Left lung (tissue), 14 donors: ENCODE measurements at regions of chr19 and their contacts with region 1.

Region 1: GRCh38 chr19:42254989-42255765 is at the start of gene ERF:
- DNase-seq: peak; percentile 94 to 98 (median 95)
- ATAC-seq: peak; percentile 83
- H3K4me3 ChIP-seq: peak within 1 kb of the TSS; percentile 98 to 100
- H3K27ac ChIP-seq: peak within 1 kb of the TSS; percentile 95 to 98
- H3K4me1 ChIP-seq: peaks cover 24 to 48% of the 10 kb centered on the region in 2 donors
- H3K27me3 ChIP-seq: peaks cover 0 to 19% of the 10 kb centered on the region in 2 donors
- CTCF ChIP-seq: peak in 1 of 2 donors; percentile 14
- polyA plus RNA-seq, gene ERF: 42.9 to 56.4 (median 48.9) TPM

Region 2: DNA sequence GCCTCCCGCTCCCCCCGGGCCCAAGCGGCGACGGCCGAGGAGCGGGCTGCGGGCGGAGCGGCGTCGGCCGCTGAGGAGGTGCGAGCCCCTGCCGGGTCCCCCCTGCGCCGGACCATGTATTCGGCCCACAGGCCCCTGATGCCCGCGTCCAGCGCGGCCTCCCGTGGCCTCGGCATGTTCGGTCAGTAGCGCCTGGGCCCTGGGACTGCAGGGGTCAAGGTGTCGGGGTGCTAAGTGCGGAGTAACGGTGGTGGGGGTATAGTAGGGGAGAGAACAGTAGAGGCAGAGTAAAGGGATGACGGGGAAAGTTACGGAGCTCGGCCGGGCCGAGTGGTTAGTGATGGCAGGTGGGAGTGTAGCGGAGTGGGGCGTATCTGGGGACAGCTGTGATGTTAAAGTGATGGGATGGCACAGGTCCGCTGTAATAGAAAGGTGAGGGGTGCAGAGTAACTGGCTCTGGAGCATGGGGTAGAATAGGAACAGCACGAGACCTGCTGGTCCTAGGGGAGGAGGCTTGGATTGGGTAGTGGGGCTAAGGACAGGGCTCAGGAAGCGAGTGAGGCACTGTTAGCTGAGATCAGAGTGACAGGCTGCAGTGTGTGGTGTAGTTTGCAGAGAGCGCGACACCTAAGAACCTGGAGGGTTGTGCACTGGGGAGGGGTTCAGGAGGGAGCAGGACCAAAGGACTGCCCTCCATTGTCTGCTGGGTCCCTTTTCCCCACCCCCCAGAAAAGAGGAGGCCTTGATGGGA is 29.6 kb after region 1 on chr19:
- intact Hi-C with region 1: loop called in 1 of 2 experiments (anchors 5 kb)
- DNase-seq: peak in 2 of 4 donors; percentile 51 to 86
- ATAC-seq: no peak
- H3K4me3 ChIP-seq: peak overlapping the region; percentile 33 to 62
- H3K27ac ChIP-seq: peak overlapping the region; percentile 54 to 77
- H3K4me1 ChIP-seq: peaks cover 40 to 54% of the 10 kb centered on the region in 2 donors
- H3K27me3 ChIP-seq: no peaks in the 10 kb centered on the region
- CTCF ChIP-seq: no peak

Region 3: GRCh38 chr19:42468273-42468796 is 213.2 kb after region 1 on chr19:
- intact Hi-C with region 1: no loop called
- DNase-seq: no peak
- ATAC-seq: no peak
- H3K4me3 ChIP-seq: no peak overlapping the region
- H3K27ac ChIP-seq: no peak overlapping the region
- H3K4me1 ChIP-seq: peaks cover 0 to 34% of the 10 kb centered on the region in 2 donors
- H3K27me3 ChIP-seq: no peaks in the 10 kb centered on the region
- CTCF ChIP-seq: no peak